ENCODE measurements at regions of chr5 and their contacts with region 1.

Region 1: DNA sequence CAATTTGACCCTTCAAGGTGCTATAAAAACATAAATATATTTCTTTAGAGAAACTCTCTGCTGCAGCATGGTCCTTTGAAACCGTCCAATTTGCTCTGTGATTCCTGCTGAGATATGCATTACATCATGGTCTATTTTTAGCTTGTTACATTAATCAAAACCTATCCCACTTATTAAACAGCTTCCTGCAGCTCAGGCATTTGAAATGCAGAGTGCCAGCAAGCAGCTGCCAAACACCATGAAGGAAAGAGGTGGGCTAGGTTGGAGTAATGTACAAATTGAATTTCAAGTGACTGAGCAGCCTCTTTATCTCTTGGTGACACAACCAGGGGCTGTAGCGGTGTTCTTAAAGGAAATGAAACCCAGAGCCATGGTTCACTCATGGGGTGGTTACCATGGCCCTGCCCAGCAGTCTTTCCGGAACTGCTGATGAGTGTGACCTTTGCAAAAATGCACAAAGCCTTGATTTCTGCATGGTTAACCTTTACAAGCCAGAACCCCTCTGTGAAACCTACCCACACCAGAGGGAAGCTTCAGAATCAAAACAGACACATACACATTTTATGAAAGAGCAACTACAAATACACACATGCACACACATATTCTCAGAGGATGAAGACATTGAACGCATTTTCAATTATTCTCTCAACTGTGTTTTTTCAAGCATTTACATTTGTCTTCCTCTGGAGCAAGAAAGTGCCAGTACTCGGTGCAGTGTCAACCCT is 155.8 kb upstream of the ZNF608 start:
- DNase-seq: peak in 2 of 3 donors; percentile 17 to 35
- ATAC-seq: peak; percentile 12 to 88
- H3K4me3 ChIP-seq: no peak overlapping the region
- H3K27ac ChIP-seq: no peak overlapping the region
- H3K4me1 ChIP-seq: peaks cover 4% of the 10 kb centered on the region
- H3K27me3 ChIP-seq: no peaks in the 10 kb centered on the region

Region 2: GRCh38 chr5:124697933-124698591 is 204.2 kb before region 1 on chr5:
- intact Hi-C with region 1: no loop called
- DNase-seq: peak in 1 of 3 donors; percentile 71
- ATAC-seq: peak; percentile 87 to 88
- H3K4me3 ChIP-seq: no peak overlapping the region
- H3K27ac ChIP-seq: peak overlapping the region; percentile 91
- H3K4me1 ChIP-seq: peaks cover 1% of the 10 kb centered on the region
- H3K27me3 ChIP-seq: no peaks in the 10 kb centered on the region

Region 3: DNA sequence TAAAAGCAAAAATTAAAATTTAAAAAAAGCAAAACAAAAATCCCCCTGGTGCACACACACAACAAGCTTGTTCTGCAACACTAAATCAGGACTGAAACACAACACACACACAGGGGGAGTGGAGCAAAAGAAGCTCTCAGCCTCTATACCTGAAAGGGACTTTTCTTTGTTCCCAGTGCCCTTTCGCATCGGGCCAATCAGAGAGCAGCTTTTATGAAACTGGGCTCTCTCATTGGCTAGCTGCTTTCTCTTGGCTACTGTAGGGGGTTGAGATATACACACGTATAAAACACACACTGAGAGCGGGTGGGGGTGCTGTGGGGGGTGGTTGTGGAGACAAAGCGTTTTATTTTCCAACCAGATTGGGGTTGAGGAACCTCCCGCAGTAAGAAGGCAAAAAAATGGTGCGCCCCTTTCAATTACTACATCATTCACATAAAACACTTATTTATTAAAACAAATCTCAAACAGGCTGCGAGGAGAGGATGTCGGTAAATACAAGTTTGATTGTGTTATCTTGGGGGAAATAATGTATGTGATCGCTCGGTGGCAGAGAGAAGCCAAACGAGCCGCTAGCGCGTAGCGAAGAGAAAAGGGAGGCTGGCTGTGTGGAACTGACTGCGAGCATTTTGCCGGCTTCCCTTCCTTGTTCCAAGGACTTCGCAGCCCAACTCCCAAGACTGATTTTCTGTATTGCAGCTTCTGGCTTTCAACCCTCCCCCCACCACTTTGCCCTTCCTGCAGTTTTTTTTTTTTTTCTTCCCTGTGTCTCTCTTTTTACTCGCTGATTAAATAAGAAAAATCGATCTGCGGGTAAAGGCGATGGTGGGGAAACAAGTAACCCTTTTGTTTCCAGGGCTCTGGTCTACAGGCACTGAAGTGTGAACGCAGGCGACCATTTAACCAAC is 153.3 kb before region 1 on chr5:
- intact Hi-C with region 1: loop called in 2 of 4 experiments (anchors 5 to 10 kb)
- DNase-seq: peak; percentile 57 to 77 (median 70)
- ATAC-seq: peak; percentile 85 to 90
- H3K4me3 ChIP-seq: peak overlapping the region; percentile 85
- H3K27ac ChIP-seq: peak overlapping the region; percentile 96
- H3K4me1 ChIP-seq: no peaks in the 10 kb centered on the region
- H3K27me3 ChIP-seq: no peaks in the 10 kb centered on the region

Region 4: DNA sequence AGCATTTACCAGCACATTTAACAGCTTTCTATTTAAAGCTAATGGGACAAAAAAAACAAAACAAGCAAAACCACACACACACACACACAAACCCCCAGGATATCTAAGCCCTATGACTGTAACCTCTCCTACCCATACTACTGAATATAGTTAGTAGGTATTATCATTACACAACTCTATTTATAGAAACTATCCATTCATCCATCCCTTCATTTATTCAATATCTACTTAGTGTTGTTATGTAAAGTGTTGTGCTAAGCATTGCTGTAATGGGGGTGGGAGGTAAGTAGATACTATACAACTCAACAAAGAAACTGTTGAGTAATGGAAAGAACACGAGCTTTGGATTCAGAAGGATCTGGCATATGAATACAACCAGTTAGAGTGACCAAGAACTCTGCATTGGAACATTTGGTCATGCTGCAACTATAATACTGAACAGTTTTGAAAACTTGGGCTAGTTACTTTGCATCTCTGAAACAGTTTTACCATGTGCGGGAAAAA is 73.5 kb before region 1 on chr5:
- intact Hi-C with region 1: no loop called
- DNase-seq: no peak
- ATAC-seq: no peak
- H3K4me3 ChIP-seq: no peak overlapping the region
- H3K27ac ChIP-seq: no peak overlapping the region
- H3K4me1 ChIP-seq: no peaks in the 10 kb centered on the region
- H3K27me3 ChIP-seq: no peaks in the 10 kb centered on the region

Region 5: DNA sequence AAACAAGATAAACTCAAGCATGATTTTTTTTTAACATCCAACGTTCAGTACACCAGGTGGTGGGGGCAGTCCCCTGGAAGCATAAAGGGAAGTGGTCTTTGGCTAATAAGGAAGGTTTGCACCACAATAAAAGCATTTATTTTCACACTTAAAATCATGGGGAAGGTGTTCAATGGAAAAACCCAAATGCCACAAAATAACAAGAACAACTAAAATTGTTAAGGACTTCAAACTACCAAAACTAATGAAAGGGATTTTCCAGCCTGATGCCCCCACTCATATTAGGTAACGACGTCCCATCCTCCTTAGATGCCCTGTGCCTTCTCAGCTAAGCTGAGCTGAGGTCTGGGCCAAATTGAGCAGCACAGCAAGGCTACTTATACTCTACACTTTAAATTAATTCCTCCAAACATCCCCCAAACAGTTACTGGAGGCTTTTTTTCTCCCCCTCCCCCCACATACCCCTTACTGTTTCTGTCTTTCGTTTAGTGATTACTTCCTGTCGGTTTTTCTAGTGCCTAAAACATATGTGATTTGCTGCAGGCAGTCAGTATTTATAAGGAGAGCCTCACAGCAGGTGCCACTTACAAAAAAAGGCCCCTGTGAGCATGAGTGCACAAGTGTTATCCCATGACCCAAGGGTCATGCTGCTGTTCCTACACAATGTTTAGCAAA is 103.9 kb after region 1 on chr5:
- intact Hi-C with region 1: no loop called
- DNase-seq: no peak
- ATAC-seq: no peak
- H3K4me3 ChIP-seq: no peak overlapping the region
- H3K27ac ChIP-seq: no peak overlapping the region
- H3K4me1 ChIP-seq: no peaks in the 10 kb centered on the region
- H3K27me3 ChIP-seq: no peaks in the 10 kb centered on the region

Measured in right cardiac atrium (tissue), 5 donors.